B cell (primary cell): ENCODE measurements at regions of chr16 and their contacts with region 1.

Region 1: DNA sequence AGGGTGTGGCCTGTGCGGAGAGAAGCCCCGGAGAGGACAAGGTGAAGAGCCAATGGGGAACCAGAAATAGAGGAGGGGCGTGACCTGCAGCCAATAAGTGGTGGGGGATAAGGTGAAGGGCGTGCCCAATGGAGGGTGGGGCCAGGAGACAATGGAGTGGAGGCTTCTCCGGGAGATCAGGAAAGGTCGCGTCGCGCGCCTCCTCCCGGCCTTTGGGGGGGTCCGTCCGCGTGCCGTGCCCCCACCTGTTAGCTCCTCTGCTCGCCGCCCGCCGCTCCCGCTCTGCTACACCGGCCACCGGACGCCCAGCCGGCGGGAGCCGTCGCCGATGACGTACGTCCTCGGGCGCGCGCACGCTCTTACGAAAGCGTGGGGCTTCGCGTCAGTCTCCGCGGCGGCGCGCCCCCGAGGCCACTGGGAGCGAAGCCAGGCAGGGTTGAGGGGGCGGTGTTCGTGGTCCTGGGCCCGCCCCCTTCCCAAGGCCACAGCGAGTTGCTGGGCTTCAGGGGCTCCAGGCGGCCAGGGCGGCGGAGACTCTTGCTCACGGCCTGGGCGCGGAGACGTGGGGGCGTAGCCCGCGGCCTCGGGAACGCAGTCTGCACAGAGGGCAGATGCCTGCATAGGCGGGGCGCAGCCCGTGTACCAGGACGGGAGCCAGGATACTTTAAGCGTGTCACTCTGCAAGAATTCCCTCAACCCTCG is at the start of gene MATCAP1:
- DNase-seq: peak; percentile 98
- ATAC-seq: peak; percentile 96
- H3K4me3 ChIP-seq: peak within 1 kb of the TSS; percentile 66 to 95 (median 76)
- H3K4me3 Mint-ChIP-seq: peak within 1 kb of the TSS; percentile 93
- H3K27ac ChIP-seq: peak within 1 kb of the TSS; percentile 76 to 96
- H3K27ac Mint-ChIP-seq: peak within 1 kb of the TSS; percentile 50
- H3K4me1 ChIP-seq: peaks cover 20 to 22% of the 10 kb centered on the region in 2 donors
- H3K4me1 Mint-ChIP-seq: peaks cover 13% of the 10 kb centered on the region
- H3K27me3 ChIP-seq: peaks cover 0 to 39% (median 8%) of the 10 kb centered on the region in 4 experiments
- H3K27me3 Mint-ChIP-seq: peaks cover 14% of the 10 kb centered on the region
- CTCF ChIP-seq: no peak
- total RNA-seq, gene MATCAP1: 6.2 and 12.4 TPM in 2 replicates

Region 2: DNA sequence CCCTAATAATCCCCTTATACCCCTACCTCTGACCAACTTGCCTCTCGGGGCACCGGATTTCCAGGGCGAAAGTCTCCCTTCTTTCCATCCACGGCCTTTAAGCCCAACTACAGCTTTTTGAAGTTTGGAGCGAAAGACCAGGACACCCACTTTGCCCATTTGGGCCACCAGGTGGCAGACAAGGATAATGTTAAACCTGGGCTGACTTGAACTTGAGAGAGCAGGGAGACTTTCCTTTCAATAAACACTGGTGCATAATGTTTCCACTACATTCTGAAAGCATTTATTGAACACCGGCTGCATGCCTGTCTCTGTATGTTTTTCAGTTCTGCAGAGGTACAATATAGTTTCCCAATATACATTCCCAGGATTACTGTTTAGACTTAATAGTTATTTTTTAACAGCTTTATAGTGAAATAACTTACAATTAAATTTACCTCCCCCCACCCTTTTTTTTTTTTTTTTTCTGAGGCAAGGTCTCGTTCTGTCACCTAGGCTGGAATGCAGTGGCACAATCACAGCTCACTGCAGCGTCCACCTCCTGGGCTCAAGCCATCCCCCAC is 229.6 kb before region 1 on chr16:
- CTCF ChIA-PET with region 1: interaction called, 12 read pairs
- POLR2A ChIA-PET with region 1: interaction called, 11 read pairs
- intact Hi-C with region 1: loop called (anchors 1 kb)
- DNase-seq: peak; percentile 77
- ATAC-seq: peak; percentile 82
- H3K4me3 ChIP-seq: no peak overlapping the region
- H3K4me3 Mint-ChIP-seq: no peak overlapping the region
- H3K27ac ChIP-seq: no peak overlapping the region
- H3K27ac Mint-ChIP-seq: no peak overlapping the region
- H3K4me1 ChIP-seq: peaks cover 0 to 4% of the 10 kb centered on the region in 2 donors
- H3K4me1 Mint-ChIP-seq: no peaks in the 10 kb centered on the region
- H3K27me3 ChIP-seq: peaks cover 0 to 22% (median 13%) of the 10 kb centered on the region in 4 experiments
- H3K27me3 Mint-ChIP-seq: peaks cover 52% of the 10 kb centered on the region
- CTCF ChIP-seq: peak; percentile 86

Region 3: DNA sequence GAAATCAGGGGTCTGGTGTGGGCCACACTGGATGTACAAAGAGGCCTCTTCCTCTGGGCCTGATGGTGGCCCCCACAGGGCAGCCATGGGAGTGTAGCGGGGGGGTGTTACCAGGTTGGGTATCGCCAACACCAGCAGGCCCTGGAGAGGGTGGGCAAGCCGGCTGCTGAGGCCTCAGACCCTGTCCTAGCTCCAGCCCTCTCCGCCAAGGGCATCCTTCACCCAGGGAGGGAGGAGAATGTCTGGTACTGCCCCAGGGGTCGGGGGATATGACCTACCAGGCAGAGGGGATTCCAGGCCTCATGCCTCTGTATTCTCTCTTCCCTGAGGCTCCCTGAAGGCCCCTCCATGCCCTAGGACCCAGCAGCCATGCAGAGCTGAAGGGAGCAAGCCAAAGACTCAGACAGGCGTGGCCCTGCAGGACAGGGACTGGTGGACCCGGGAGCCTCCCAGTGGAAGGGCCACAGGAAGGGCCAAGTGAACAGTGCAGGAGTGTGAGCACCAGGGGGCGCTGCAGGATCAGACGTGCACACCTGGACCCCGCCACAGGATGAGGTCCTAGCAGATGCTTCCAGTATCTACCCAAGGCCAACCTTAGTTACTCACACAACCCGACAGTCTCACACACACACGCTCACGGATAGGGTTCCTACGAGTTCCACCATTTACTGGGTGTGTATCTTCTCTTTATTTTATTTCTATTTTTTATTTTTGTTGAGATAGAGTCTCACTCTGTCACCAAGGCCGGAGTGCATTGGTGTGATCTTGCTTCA is 206.3 kb before region 1 on chr16:
- CTCF ChIA-PET with region 1: interaction called, 27 read pairs
- POLR2A ChIA-PET with region 1: no interaction called
- intact Hi-C with region 1: no loop called
- DNase-seq: peak; percentile 87
- ATAC-seq: peak; percentile 98
- H3K4me3 ChIP-seq: no peak overlapping the region
- H3K4me3 Mint-ChIP-seq: no peak overlapping the region
- H3K27ac ChIP-seq: no peak overlapping the region
- H3K27ac Mint-ChIP-seq: peak overlapping the region; percentile 15
- H3K4me1 ChIP-seq: peaks cover 0 to 3% of the 10 kb centered on the region in 2 donors
- H3K4me1 Mint-ChIP-seq: peaks cover 1% of the 10 kb centered on the region
- H3K27me3 ChIP-seq: peaks cover 0 to 13% (median 0%) of the 10 kb centered on the region in 4 experiments
- H3K27me3 Mint-ChIP-seq: peaks cover 16% of the 10 kb centered on the region
- CTCF ChIP-seq: peak; percentile 93

Region 4: DNA sequence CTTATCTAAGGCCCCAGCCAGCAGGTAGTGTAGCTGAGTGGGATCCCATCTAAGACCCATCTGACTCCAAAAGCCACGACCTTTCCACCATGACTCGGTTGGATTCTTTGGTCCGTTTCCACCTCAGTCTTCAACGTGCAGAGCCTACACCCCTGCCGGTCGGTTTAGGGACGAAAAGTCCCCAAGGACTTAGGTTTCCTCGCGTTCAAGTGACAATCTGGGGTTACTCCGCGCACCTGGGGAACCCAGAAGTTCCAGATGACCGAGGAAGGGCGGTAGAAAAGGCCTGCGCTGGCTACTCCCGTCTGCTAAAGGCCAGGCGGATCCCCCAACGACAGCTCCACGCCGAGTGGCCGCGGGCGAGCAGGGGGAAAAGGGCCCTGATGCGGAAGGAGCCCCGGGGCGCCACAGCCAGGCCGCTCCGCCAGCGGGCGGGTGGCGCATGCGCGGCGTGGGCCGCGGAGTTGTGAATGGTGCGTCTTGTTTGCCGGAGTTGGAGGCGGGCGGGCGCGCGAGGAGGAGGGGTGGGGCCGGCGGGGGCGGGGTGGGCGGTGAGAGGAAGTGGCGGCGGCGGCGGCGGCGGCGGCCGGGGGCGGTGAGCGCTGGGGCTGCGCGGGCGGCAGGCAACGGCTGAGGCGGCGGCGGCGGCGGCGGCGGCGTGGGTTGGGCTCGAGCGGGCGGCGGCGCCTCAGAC is 155.1 kb before region 1 on chr16 and contains the start of gene CBFB:
- CTCF ChIA-PET with region 1: interaction called, 6 read pairs
- POLR2A ChIA-PET with region 1: no interaction called
- intact Hi-C with region 1: loop called (anchors 1 kb)
- DNase-seq: peak; percentile 97
- ATAC-seq: peak; percentile 83
- H3K4me3 ChIP-seq: peak within 1 kb of the TSS; percentile 69 to 82 (median 76)
- H3K4me3 Mint-ChIP-seq: peak within 1 kb of the TSS; percentile 94
- H3K27ac ChIP-seq: peak within 1 kb of the TSS; percentile 96 to 98
- H3K27ac Mint-ChIP-seq: peak within 1 kb of the TSS; percentile 94
- H3K4me1 ChIP-seq: peaks cover 13 to 18% of the 10 kb centered on the region in 2 donors
- H3K4me1 Mint-ChIP-seq: peaks cover 40% of the 10 kb centered on the region
- H3K27me3 ChIP-seq: no peaks in the 10 kb centered on the region
- H3K27me3 Mint-ChIP-seq: no peaks in the 10 kb centered on the region
- CTCF ChIP-seq: peak; percentile 21
- total RNA-seq, gene CBFB: 89.0 and 101 TPM in 2 replicates

Region 5: GRCh38 chr16:67226804-67227557 is 43.2 kb after region 1 on chr16 and contains the start of gene TMEM208:
- CTCF ChIA-PET with region 1: interaction called, 4 read pairs
- POLR2A ChIA-PET with region 1: no interaction called
- intact Hi-C with region 1: loop called (anchors 1 kb)
- DNase-seq: peak; percentile 99
- ATAC-seq: peak; percentile 99
- H3K4me3 ChIP-seq: peak within 1 kb of the TSS; percentile 77 to 99 (median 86)
- H3K4me3 Mint-ChIP-seq: peak within 1 kb of the TSS; percentile 100
- H3K27ac ChIP-seq: peak within 1 kb of the TSS; percentile 52 to 82
- H3K27ac Mint-ChIP-seq: peak within 1 kb of the TSS; percentile 100
- H3K4me1 ChIP-seq: peaks cover 15 to 22% of the 10 kb centered on the region in 2 donors
- H3K4me1 Mint-ChIP-seq: peaks cover 29% of the 10 kb centered on the region
- H3K27me3 ChIP-seq: no peaks in the 10 kb centered on the region
- H3K27me3 Mint-ChIP-seq: no peaks in the 10 kb centered on the region
- CTCF ChIP-seq: peak; percentile 13
- total RNA-seq, gene TMEM208: 36.3 and 40.4 TPM in 2 replicates

Region 6: GRCh38 chr16:67339453-67339852 is 155.7 kb after region 1 on chr16:
- CTCF ChIA-PET with region 1: no interaction called
- POLR2A ChIA-PET with region 1: no interaction called
- intact Hi-C with region 1: no loop called
- DNase-seq: peak; percentile 16
- ATAC-seq: no peak
- H3K4me3 ChIP-seq: no peak overlapping the region
- H3K4me3 Mint-ChIP-seq: no peak overlapping the region
- H3K27ac ChIP-seq: no peak overlapping the region
- H3K27ac Mint-ChIP-seq: no peak overlapping the region
- H3K4me1 ChIP-seq: no peaks in the 10 kb centered on the region
- H3K4me1 Mint-ChIP-seq: no peaks in the 10 kb centered on the region
- H3K27me3 ChIP-seq: no peaks in the 10 kb centered on the region
- H3K27me3 Mint-ChIP-seq: peaks cover 11% of the 10 kb centered on the region
- CTCF ChIP-seq: no peak